Calu3 (cell line): ENCODE measurements at regions of chr15 and their contacts with region 1.

Region 1: GRCh38 chr15:67240235-67241131 is 14.0 kb downstream of the AAGAB start:
- DNase-seq: peak; percentile 38
- H3K4me3 Mint-ChIP-seq: no peak overlapping the region
- H3K27ac Mint-ChIP-seq: peak overlapping the region; percentile 17
- H3K4me1 Mint-ChIP-seq: peaks cover 21% of the 10 kb centered on the region
- H3K27me3 Mint-ChIP-seq: no peaks in the 10 kb centered on the region
- CTCF ChIP-seq: peak; percentile 40

Region 2: DNA sequence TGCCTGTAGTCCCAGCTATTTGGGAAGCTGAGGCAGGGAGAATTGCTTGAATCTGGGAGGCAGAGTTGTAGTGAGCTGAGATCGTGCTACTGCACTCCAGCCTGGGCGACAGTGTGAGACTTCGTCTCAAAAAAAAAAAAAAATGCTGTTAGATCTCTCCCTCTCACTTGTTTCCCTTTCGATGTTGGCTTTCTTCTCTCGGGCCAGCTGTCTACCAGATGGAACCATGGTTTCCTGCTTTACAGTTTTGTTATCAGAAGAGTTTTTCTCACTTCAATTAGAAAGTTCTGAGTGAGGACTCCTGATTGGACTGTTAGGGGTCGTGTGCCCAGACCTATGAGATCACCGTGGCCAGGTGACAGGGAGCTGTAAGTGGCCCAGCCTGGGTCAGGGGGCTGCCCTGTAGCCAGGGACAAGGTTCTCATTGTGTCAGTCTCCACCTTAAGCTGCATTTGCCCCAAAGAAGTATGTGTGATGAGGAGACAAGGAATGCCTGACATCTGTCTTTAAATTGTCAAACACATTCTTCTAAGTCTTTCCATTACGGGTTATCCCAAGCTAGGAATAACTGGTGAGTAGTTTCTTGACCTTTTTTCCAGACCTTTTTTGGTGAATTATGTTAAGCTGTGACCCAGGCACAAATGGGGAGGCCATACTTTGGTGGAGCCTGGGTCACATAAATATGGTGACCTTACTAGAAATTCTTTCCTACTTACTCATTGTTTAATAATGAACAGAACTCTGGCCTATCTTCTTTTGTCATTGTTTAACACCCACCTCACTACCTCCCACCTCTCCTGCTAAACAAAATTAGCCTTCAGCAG is 768.1 kb before region 1 on chr15:
- CTCF ChIA-PET with region 1: no interaction called
- intact Hi-C with region 1: no loop called
- DNase-seq: peak; percentile 60
- H3K4me3 Mint-ChIP-seq: peak overlapping the region; percentile 8
- H3K27ac Mint-ChIP-seq: peak overlapping the region; percentile 77
- H3K4me1 Mint-ChIP-seq: peaks cover 16% of the 10 kb centered on the region
- H3K27me3 Mint-ChIP-seq: no peaks in the 10 kb centered on the region
- CTCF ChIP-seq: no peak

Region 3: GRCh38 chr15:67280217-67280616 is 39.7 kb after region 1 on chr15:
- CTCF ChIA-PET with region 1: interaction called, 11 read pairs
- intact Hi-C with region 1: no loop called
- DNase-seq: no peak
- H3K4me3 Mint-ChIP-seq: no peak overlapping the region
- H3K27ac Mint-ChIP-seq: no peak overlapping the region
- H3K4me1 Mint-ChIP-seq: no peaks in the 10 kb centered on the region
- H3K27me3 Mint-ChIP-seq: no peaks in the 10 kb centered on the region
- CTCF ChIP-seq: no peak

Region 4: DNA sequence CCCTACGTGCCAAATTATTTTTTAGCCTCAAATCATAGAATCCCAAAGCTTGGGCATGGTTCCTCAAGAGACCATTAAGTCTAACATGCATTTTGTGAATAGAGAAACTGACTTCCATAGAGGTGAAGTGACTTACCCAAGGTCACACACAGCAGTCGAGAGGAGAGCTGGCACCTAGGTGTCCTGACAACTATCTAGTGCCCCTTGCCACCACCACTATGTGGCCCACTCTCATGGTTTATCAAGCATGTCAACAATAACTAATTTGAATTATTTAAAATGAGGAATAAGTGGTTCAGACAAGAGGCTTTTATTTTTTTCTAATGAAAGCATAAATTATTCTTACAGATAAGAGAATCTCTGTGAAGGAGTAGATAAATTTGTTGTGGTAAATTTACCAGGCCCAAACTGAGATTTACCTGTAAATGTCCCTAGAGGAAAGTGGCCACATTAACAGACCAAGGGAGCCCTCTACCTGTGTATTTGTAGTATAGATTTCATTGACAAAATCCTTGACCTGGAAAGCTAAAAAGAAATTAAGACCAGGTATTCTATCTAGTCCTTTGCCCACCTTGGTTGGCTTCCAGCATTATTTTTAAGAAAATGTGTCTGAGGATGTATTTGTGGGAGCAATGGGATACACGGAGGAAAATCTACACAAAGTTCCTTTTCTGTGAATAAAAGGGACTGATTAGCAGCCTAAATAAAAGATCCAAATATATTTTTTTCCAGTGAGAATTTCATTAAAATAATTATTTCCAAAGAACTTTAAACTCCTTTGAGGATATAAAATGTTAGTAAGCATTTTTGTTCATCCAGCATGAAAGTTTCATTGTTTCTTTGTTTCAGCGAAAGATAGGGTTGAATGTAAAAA is 63.2 kb after region 1 on chr15:
- CTCF ChIA-PET with region 1: interaction called, 6 read pairs
- intact Hi-C with region 1: loop called (anchors 2 kb)
- DNase-seq: peak; percentile 38
- H3K4me3 Mint-ChIP-seq: no peak overlapping the region
- H3K27ac Mint-ChIP-seq: no peak overlapping the region
- H3K4me1 Mint-ChIP-seq: no peaks in the 10 kb centered on the region
- H3K27me3 Mint-ChIP-seq: no peaks in the 10 kb centered on the region
- CTCF ChIP-seq: peak; percentile 53